Activated CD8-positive, alpha-beta T cell treated with anti-CD3 and anti-CD28 coated beads, Interleukin-2, amount 10 ng/mL, durations not matched to agents 7 days and 5 days (primary cell): ENCODE measurements at regions of chr6 and their contacts with region 1.

Region 1: DNA sequence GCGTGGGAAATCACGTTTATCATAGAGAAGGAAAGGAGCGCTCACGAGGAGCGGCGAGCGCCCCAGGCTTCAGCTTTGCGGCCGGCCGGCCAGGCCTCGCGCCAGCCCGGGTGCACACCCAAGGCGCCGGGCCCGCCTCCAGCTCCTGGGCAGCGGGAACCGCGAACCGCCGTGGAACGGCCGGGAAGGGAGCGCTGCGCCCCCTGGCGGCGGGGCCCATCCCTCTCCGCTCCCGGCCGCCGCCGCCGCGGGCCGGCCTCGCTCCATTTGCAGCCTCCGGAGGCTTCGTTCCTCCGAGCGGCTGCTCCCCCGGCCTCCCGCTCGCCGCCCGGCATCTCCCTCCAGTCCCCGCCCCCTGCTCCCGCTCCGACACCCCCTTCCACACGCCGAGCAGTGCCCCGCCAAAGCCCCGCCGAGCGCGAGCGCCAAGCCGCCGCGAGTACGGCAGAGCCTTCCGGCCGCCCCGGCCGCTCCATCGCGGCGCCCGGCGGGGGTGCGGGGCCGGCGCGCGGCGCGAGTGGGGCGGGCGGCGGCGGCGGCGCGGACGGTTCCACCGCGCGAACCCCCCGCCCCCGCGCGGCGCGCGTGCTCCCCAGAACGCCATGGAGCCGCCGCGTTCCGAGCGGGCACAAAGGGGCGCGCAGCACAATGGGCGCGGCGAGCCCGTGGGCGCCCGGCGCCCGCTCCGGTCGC is 956 bp downstream of the BEND3 start:
- DNase-seq: peak; percentile 70
- ATAC-seq: peak; percentile 79
- H3K4me3 Mint-ChIP-seq: peak overlapping the region; percentile 74
- H3K27ac Mint-ChIP-seq: peak overlapping the region; percentile 65
- H3K4me1 Mint-ChIP-seq: peaks cover 23% of the 10 kb centered on the region
- H3K27me3 Mint-ChIP-seq: peaks cover 13% of the 10 kb centered on the region

Region 2: DNA sequence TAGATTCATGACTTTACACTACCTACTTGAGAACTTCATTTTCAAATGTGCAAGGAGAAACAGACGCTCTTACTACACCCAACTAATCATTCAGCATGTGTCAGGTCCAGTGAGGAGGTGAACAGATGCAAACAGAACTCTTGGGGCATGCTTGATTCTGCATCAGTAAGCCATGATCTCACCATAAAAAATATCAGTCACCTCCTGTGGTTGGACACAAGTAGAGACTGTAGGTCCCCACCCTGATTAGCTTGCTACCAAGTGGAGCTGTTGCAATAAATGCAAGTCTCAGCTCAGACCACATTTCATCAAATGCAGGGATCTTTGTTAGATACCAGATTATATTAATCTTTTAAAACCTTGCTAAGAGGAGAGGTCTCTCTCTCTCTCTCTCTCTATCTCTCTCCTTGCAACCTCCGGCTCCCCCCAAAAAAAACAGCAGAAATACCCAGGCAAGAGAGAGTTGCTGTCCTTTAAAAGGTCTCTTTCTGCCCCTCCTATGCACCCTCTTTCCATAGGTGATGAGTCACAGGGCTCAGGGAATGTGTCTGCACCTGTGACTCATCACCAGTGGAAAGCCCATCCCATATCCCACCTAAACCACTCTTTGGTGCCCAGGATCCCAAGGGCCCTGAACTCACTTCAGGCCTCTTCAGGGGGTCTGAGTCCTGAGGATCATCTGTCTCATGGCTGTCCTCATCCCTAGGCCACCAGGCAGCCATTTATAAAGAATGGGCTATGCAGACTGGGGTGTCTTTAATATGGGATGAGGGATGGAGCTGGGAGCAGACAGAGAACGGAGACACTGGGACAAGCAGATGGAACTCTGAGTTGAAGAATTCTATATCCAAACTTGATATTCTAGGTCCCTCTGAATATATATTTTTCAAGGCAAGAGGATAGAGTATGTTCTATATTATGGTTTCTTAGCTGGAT is 330.5 kb before region 1 on chr6:
- CTCF ChIA-PET with region 1: no interaction called
- POLR2A ChIA-PET with region 1: no interaction called
- DNase-seq: no peak
- ATAC-seq: no peak
- H3K4me3 Mint-ChIP-seq: no peak overlapping the region
- H3K27ac Mint-ChIP-seq: no peak overlapping the region
- H3K4me1 Mint-ChIP-seq: no peaks in the 10 kb centered on the region
- H3K27me3 Mint-ChIP-seq: peaks cover 4% of the 10 kb centered on the region

Region 3: DNA sequence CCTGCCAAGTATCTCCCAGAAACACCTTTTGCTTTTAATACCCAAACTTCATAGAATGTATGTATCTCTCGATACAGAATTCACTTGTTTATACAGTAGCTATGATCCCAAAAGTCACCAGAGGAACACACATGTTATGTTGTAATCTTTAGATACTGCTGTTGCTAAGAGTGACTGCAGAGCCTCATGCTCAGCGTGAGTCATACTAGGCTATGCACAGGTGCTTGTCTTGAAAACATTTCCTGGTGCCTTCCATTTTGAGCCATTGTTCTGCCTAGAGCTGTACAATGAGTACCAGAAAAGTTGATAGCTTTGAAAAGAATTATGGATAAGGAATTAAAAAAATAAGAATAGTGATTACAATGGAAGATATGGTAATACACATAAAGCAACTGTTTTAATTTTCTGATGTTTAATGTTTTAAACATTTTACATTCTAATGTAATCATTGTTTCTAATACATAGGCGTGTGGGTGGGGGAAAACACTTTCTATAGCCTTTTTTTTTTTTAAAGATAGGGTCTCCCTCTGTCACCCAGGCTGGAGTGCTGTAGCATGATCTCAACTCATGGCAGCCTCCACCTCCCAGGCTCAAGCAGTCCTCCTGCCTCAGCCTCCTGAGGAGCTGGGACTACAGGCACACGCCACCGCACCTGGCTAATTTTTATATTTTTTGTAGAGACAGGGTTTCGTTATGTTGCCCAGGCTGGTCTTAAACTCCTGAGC is 219.2 kb before region 1 on chr6:
- CTCF ChIA-PET with region 1: no interaction called
- POLR2A ChIA-PET with region 1: no interaction called
- DNase-seq: no peak
- ATAC-seq: no peak
- H3K4me3 Mint-ChIP-seq: no peak overlapping the region
- H3K27ac Mint-ChIP-seq: no peak overlapping the region
- H3K4me1 Mint-ChIP-seq: no peaks in the 10 kb centered on the region
- H3K27me3 Mint-ChIP-seq: peaks cover 12% of the 10 kb centered on the region

Region 4: DNA sequence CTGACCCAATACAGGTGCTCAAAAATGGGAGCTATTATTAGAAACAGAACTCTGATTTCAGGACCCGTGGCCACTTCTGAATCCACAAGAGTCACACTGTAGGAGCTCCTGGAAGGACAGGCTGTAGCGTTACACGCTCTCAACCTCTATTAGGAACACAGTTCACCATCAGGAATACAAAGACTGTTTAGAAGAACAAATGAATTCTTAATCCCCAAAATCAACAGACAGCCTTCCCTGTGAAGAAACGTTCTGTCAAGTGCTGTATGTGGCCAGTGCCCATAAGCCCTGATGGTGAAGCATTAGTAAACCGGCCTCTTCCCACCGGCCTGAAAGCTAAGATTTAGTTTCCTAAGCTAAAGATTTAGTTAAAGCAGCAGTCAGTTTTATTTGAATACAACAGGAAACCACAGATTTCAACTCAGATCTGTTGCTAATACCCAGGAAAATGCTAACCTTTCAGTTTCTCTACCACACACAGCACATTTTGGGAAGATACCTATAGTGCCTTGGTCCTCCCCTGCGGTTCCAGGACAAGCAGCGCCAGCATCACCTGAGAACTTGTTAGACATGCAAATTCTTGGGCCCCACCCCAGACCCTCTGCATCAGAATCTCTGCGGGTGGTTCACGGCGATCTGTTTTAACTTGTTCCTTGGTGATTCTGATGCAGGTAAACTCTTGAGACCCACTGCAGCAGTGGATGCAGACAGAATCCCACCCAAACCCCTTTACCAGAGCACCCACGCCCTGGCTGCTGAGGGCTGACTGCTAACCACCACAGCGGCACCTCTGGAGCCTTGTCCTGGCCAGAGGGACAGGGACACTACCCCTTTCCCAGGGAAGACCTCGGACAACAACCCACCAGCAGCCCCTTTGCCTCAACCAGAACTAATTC is 53.0 kb before region 1 on chr6:
- CTCF ChIA-PET with region 1: interaction called, 12 read pairs
- POLR2A ChIA-PET with region 1: interaction called, 3 read pairs
- DNase-seq: peak; percentile 29
- ATAC-seq: peak; percentile 66
- H3K4me3 Mint-ChIP-seq: peak overlapping the region; percentile 68
- H3K27ac Mint-ChIP-seq: peak overlapping the region; percentile 74
- H3K4me1 Mint-ChIP-seq: peaks cover 49% of the 10 kb centered on the region
- H3K27me3 Mint-ChIP-seq: no peaks in the 10 kb centered on the region

Region 5: DNA sequence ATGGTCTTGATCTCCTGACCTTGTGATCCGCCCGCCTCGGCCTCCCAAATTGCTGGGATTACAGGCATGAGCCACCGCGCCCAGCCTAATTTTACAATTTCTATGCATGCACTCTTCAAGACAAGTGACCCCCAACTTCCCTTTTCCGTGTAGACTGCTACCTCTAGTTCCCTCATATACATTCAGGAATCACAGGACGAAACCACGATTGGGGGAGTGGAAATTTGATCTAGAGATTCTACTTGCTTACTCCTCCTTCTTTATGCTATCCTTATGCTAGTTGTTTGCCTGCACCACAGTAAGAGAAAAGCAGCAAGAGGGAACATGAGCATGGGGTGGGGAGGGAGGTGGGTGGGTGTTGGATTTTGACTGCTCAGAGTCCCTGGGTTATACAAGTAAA is 925.3 kb after region 1 on chr6:
- CTCF ChIA-PET with region 1: no interaction called
- POLR2A ChIA-PET with region 1: no interaction called
- DNase-seq: no peak
- ATAC-seq: no peak
- H3K4me3 Mint-ChIP-seq: no peak overlapping the region
- H3K27ac Mint-ChIP-seq: no peak overlapping the region
- H3K4me1 Mint-ChIP-seq: no peaks in the 10 kb centered on the region
- H3K27me3 Mint-ChIP-seq: no peaks in the 10 kb centered on the region